ENCODE measurements at regions of chr11 and their contacts with region 1.

Region 1: DNA sequence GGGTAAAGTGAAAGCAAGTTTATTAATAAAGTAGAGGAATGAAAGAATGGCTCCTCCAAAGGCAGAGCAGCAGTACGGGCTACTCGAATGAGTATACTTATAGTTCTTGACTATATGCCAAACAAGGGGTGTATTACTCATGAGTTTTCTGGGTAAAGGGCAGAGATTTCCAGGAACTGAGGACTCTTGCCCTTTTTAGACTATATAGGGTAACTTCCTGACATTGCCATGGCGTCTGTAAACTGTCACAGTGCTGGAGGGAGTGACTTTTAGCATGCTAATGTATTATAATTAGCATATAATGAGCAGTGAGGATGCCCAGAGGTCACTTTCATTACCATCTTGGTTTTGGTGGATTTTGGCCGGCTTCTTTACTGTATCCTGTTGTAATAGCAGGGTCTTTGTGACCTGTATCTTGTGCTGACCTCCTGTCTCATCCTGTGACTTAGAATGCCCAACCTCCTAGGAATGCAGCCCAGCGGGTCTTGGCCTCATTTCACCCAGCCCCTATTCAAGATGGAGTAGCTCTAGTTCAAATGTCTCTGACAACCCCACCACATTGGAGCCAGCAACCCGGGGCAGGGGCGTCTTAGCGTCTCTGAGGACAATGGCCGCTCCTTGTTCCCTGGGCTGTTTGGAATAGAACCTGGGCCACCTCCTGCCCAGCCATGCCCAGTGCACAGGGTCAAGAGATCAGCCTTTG is 34.9 kb upstream of the CD82 start:
- DNase-seq: peak; percentile 70
- H3K4me3 Mint-ChIP-seq: no peak overlapping the region
- H3K27ac Mint-ChIP-seq: peak overlapping the region; percentile 82
- H3K4me1 Mint-ChIP-seq: peaks cover 37% of the 10 kb centered on the region
- H3K27me3 Mint-ChIP-seq: no peaks in the 10 kb centered on the region

Region 2: DNA sequence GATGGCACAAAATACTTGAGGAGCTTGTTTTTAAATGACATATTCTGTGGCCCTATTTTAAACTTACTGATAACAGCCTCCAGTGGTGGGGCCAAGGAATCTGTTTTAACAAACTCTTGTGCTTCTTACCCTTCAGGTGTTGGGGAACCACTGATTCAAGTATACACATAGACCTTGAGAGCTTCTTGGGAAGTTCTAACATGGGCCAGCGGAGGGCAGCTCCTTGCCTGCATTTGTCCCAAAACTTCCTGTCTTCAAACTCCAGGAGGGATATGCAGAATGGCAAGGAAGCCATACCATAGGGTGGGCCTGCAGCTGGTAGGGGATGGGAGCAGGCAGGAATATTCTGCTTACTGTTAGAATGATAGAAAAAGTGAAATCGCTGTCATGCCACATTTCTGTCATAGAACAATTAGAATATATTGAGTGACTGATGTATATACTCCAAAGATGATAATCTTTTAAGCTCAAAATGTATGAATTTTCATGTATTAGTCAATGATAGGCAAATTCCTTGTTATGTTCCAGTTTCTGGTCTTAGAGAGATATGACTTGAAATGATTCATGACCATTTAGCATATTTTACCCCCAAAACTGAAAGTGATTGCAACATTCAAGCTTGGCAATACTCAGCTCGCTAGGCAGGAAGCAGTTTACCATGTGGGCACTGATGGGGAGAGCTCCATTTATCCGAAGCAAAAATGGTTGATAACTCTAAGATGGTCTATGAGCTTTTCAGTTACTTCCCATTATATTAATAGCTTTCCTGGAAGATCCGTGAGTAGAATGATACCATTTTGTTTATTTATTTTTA is 425.9 kb before region 1 on chr11:
- CTCF ChIA-PET with region 1: no interaction called
- intact Hi-C with region 1: loop called (anchors 1 kb)
- DNase-seq: no peak
- H3K4me3 Mint-ChIP-seq: no peak overlapping the region
- H3K27ac Mint-ChIP-seq: peak overlapping the region; percentile 13
- H3K4me1 Mint-ChIP-seq: peaks cover 26% of the 10 kb centered on the region
- H3K27me3 Mint-ChIP-seq: no peaks in the 10 kb centered on the region

Region 3: GRCh38 chr11:44190868-44191200 is 339.7 kb before region 1 on chr11:
- CTCF ChIA-PET with region 1: no interaction called
- intact Hi-C with region 1: loop called (anchors 2 kb)
- DNase-seq: no peak
- H3K4me3 Mint-ChIP-seq: no peak overlapping the region
- H3K27ac Mint-ChIP-seq: no peak overlapping the region
- H3K4me1 Mint-ChIP-seq: peaks cover 32% of the 10 kb centered on the region
- H3K27me3 Mint-ChIP-seq: no peaks in the 10 kb centered on the region

Region 4: DNA sequence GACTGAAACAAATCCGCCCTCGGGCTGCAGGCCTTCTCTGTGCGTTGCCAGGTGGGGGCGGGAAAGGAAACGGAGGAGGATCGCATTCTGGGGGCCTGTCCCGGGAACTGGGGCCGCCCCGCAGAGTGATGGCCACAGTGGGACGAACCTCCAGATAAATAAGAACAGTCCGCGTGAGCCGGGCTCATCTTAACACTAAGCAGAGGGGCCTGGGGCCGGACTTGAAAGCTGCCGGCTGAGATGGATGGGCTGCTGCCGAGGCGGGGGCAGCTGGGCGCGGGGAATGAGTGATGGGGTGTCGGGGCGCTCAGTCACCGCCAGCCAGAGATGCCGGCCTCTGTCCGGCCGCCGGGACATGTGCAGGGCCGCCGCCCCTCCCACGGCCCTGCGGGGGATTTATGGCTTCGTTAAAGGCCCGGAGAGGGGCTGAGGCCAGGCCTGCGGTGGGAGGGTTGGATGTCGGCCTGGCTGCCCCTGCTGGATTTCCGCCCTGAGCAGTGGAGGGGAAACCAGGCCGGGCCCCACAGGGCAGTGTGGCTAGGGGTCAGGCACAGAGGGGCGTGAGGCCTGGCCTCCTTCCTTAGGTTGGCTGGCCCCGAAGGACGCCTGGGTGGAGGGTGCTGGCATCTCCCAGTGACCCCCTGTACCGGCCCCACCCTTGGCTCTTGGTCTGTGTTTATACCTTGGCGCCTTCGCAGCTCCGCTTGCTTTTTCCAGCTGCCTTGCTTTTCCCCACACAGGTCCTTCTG is 10.4 kb before region 1 on chr11:
- CTCF ChIA-PET with region 1: interaction called, 91 read pairs
- intact Hi-C with region 1: no loop called
- DNase-seq: no peak
- H3K4me3 Mint-ChIP-seq: no peak overlapping the region
- H3K27ac Mint-ChIP-seq: no peak overlapping the region
- H3K4me1 Mint-ChIP-seq: no peaks in the 10 kb centered on the region
- H3K27me3 Mint-ChIP-seq: peaks cover 9% of the 10 kb centered on the region

Region 5: DNA sequence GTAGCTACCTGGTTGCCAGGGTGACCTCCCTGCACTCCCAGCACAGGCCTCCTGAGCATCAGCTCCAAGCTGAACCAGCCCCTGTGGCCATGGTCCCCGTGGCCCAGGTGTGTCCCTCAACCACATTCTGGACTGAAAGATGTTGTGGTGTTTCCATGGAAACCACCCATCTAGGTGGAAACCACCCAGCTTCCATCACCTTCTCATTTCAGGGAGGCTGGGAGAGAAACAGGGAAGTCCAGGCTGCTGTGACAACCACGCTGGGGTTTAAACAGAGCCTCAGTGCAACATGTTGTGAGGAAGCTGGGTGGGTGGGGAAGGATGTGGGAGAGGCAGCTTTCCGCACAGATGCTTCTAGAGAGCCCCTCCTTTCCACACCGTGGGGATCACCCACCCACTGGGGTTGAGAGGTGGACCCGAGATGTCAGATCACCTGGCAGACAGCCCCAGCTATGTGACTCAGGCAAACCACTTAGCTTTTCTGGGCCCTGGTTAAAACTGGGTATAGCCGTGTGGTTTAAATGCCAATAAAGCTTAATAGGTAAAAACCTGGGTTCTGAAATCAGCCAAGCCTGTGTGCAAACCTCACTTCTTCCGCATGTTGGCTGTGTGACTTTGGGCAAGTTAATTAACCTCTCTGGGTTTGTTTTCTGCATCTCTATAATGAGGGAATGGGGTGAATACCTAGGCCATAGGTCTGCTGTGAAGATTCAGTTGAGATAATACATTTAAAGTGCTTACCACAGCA is 81.3 kb after region 1 on chr11:
- CTCF ChIA-PET with region 1: interaction called, 8 read pairs
- intact Hi-C with region 1: loop called (anchors 1 kb)
- DNase-seq: peak; percentile 78
- H3K4me3 Mint-ChIP-seq: no peak overlapping the region
- H3K27ac Mint-ChIP-seq: peak overlapping the region; percentile 71
- H3K4me1 Mint-ChIP-seq: peaks cover 82% of the 10 kb centered on the region
- H3K27me3 Mint-ChIP-seq: no peaks in the 10 kb centered on the region